PC-3 (cell line): ENCODE measurements at regions of chr13 and their contacts with region 1.

Region 1: DNA sequence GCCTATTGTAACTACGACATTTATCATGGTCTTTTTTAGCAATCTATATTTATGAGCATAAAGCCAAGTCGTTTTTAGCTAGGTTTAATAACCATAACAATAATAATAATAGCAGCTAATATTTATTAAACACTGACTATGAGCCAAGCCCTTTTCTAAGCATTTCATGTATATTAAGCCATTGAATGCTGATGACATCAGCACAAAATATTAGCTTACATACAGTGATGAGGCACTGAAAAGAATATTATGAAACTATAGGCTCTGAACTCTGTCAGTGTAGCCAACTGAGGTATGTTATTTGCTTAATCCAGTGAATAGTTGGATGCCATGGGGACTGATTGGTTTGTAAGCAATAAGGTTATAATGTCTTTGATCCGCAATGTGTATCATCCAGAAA is 235.2 kb downstream of the NDFIP2 start:
- DNase-seq: no peak
- ATAC-seq: no peak
- H3K4me3 ChIP-seq: no peak overlapping the region
- H3K27ac ChIP-seq: no peak overlapping the region
- H3K4me1 ChIP-seq: no peaks in the 10 kb centered on the region
- H3K27me3 ChIP-seq: no peaks in the 10 kb centered on the region
- CTCF ChIP-seq: no peak

Region 2: GRCh38 chr13:79703772-79704171 is 12.4 kb before region 1 on chr13:
- CTCF ChIA-PET with region 1: no interaction called
- POLR2A ChIA-PET with region 1: no interaction called
- intact Hi-C with region 1: loop called (anchors 2 kb)
- DNase-seq: no peak
- ATAC-seq: no peak
- H3K4me3 ChIP-seq: no peak overlapping the region
- H3K27ac ChIP-seq: no peak overlapping the region
- H3K4me1 ChIP-seq: no peaks in the 10 kb centered on the region
- H3K27me3 ChIP-seq: no peaks in the 10 kb centered on the region
- CTCF ChIP-seq: no peak

Region 3: GRCh38 chr13:79869326-79869725 is 153.1 kb after region 1 on chr13:
- CTCF ChIA-PET with region 1: no interaction called
- POLR2A ChIA-PET with region 1: no interaction called
- intact Hi-C with region 1: no loop called
- DNase-seq: peak; percentile 22
- ATAC-seq: no peak
- H3K4me3 ChIP-seq: no peak overlapping the region
- H3K27ac ChIP-seq: no peak overlapping the region
- H3K4me1 ChIP-seq: no peaks in the 10 kb centered on the region
- H3K27me3 ChIP-seq: no peaks in the 10 kb centered on the region
- CTCF ChIP-seq: no peak